Activated naive CD4-positive, alpha-beta T cell treated with anti-CD3 and anti-CD28 coated beads, Interleukin-2, amount 10 ng/mL, durations not matched to agents 7 days and 5 days (primary cell): ENCODE measurements at regions of chr17 and their contacts with region 1.

Region 1: DNA sequence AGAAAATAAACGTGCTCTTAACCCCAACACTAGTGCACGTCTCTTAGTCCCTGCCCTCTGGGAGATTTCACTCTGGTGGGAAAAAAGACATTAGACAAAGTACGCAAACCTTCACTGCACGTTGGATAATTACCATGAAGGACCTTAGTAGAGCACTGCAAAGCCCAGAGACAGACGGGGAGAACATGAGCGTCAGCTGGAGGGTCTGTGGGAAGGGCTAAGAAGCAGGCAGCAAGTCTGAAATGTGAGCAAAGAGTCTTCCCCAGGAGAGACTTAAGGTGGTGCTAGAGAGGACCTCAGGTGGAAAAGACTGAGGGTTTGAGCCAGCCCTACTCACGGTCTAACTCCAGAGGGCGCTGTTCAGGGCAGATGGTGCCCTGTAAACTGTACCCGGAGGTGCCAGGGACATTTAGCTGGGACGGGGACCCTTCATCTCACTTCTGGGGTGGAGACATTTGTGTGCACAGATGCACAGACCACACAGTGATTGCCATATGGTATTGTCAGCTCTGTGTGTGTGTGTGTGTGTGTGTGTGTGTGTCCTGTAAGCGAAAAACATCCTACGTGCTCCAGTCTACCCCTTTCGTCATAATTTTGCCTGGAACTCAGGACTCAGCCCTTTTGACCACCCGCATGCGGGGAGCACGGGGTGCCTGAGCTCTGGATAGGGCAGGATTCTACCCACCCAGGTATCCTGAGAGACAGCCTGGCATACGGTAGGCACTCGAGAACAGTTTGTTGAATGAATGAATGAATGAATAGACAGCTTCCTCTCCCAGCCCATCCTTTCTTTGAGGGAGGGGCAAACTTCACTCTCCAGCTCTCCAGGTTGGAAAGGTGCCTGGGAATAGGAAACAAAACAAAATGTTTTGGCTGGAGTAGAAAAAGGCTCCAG is 10.1 kb upstream of the STAC2 start:
- DNase-seq: peak; percentile 74
- H3K4me3 Mint-ChIP-seq: no peak overlapping the region
- H3K27ac Mint-ChIP-seq: no peak overlapping the region
- H3K4me1 Mint-ChIP-seq: peaks cover 28% of the 10 kb centered on the region
- H3K27me3 Mint-ChIP-seq: peaks cover 53% of the 10 kb centered on the region

Region 2: GRCh38 chr17:39209317-39210092 is 26.3 kb before region 1 on chr17:
- CTCF ChIA-PET with region 1: interaction called, 162 read pairs
- DNase-seq: peak; percentile 80
- H3K4me3 Mint-ChIP-seq: peak overlapping the region; percentile 45
- H3K27ac Mint-ChIP-seq: no peak overlapping the region
- H3K4me1 Mint-ChIP-seq: peaks cover 31% of the 10 kb centered on the region
- H3K27me3 Mint-ChIP-seq: peaks cover 69% of the 10 kb centered on the region

Region 3: DNA sequence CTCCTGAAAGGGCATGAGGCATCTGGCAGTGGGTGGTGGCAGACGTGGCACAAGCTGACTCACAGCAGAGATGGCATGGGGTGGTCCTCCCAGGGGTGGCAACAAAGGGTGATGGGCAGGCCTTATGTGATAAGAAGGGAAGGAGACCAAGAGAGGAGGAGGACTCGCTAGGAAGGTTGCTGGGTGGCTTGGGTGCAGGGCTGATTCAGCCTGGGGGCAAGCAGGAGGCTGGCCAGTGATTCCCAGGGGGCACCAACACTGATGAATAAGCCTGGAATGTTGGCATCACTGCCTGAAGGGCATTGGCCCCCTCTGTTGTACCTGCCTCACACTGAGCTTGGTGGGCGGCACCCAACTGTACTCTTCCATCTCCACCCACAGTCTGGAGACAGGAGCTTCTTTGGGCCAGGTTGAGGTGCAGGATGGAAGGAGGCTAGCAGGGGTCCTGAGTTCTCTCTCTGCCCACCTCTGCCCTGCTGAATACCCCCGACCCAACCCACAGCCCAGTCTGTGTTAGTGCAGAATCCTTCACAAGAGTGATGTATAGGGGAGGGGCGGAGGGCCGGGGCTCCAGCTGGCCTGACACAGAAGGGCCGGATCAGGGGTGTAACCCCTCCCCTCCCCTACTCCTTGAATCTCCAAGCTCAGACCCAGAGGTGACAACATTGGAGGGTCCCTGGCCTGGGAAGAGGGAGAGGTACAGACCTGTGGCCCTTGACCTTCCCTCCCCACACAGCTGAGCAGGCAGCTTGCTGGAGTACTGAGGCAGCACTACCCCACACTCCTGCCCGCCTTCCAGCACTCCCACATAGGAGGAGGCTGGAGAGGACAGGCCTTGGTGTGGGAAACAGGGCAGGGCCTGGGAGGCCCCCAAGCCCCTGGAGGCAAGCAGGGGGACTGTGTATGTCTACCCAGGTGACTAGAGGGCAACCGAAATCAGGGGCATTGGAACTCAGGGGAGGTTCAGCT is 12.7 kb before region 1 on chr17:
- CTCF ChIA-PET with region 1: interaction called, 14 read pairs
- DNase-seq: no peak
- H3K4me3 Mint-ChIP-seq: no peak overlapping the region
- H3K27ac Mint-ChIP-seq: no peak overlapping the region
- H3K4me1 Mint-ChIP-seq: peaks cover 16% of the 10 kb centered on the region
- H3K27me3 Mint-ChIP-seq: peaks cover 90% of the 10 kb centered on the region

Region 4: DNA sequence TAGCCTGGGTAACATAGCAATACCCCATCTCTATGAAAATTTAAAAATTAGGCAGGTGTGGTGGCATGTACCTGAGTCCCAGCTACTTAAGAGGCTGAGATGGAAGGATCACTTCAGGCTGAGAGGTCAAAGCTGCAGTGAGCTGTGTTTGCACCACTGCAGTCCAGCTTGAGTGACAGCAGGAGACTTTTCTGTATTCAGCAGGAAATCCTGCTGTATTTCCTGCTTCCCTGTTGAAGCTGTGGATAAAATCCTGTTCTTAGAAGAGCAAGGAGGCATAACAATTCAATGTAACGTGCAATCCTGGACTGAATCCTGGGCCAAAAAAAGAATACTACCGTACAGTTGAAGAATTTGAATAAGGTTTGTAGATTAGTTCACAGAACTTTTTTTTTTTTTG is 103.5 kb after region 1 on chr17:
- CTCF ChIA-PET with region 1: no interaction called
- DNase-seq: no peak
- H3K4me3 Mint-ChIP-seq: no peak overlapping the region
- H3K27ac Mint-ChIP-seq: no peak overlapping the region
- H3K4me1 Mint-ChIP-seq: no peaks in the 10 kb centered on the region
- H3K27me3 Mint-ChIP-seq: no peaks in the 10 kb centered on the region

Region 5: DNA sequence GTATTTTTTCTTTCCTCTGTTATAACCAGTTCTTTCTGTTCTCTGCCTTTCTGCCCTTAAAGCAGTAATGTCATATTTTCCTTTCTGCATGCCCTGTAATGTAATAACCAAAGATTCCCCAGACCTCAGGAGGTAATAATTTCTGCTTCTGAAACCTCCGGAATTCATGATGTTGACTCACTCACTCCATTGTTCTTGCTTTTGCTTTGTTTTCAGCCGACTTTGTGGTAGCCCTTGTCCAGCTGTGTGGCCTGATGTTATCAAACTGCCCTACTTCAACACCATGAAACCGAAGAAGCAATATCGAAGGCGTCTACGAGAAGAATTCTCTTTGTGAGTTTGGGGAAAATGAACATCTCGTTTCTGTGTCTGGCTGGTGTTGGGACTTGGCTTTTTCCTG is 281.4 kb after region 1 on chr17:
- CTCF ChIA-PET with region 1: no interaction called
- DNase-seq: no peak
- H3K4me3 Mint-ChIP-seq: no peak overlapping the region
- H3K27ac Mint-ChIP-seq: no peak overlapping the region
- H3K4me1 Mint-ChIP-seq: no peaks in the 10 kb centered on the region
- H3K27me3 Mint-ChIP-seq: no peaks in the 10 kb centered on the region